Spleen (tissue), 13 donors: ENCODE measurements at regions of chr1 and their contacts with region 1.

Region 1: GRCh38 chr1:156146020-156146768 is 7.2 kb upstream of the SEMA4A start:
- DNase-seq: peak; percentile 87
- H3K4me3 ChIP-seq: peak overlapping the region in 2 of 8 donors; percentile 4 to 41
- H3K27ac ChIP-seq: peak overlapping the region in 6 of 8 donors; percentile 7 to 92 (median 88)
- H3K4me1 ChIP-seq: peaks cover 34 to 57% (median 56%) of the 10 kb centered on the region in 6 donors
- H3K27me3 ChIP-seq: peaks cover 0 to 13% (median 0%) of the 10 kb centered on the region in 7 donors
- CTCF ChIP-seq: peak; percentile 60 to 89 (median 79)
- POLR2A ChIP-seq: no peak

Region 2: DNA sequence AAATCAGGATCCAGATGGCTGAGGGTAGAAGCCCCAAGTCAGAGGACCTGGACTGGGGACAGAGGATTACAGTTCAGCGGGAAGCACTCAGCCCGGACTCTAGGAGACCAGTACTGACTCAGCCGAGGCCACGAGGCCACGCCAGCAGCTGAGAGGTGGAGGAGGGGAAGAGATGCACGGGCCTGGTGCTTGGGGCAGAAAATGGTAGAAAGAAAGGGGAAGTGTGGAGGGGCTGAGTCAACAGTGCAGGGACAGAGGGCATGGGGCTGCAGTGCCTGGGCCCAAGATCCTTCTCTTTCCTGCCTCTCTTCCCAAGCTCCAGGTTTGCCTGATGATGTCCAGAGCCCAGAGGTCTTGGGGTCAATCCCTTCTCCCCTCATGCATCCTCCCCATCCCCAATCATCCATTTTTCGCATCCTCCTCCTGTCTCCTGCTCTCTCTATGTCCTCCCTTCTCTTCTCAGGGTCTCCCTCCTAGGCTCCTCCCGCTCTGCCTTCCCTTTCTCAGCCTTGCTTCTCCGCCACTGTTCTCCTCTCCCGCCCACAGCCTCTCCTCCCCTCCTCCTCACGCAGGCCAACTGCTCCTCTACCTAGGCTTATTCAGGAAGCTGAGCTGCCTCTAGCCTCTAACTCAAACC is 175.5 kb before region 1 on chr1:
- intact Hi-C with region 1: no loop called
- DNase-seq: peak; percentile 94
- H3K4me3 ChIP-seq: peak overlapping the region in 2 of 8 donors; percentile 4 to 46
- H3K27ac ChIP-seq: peak overlapping the region; percentile 60 to 99 (median 92)
- H3K4me1 ChIP-seq: peaks cover 93 to 100% (median 98%) of the 10 kb centered on the region in 6 donors
- H3K27me3 ChIP-seq: no peaks in the 10 kb centered on the region
- CTCF ChIP-seq: peak in 1 of 11 experiments; percentile 18
- POLR2A ChIP-seq: no peak

Region 3: DNA sequence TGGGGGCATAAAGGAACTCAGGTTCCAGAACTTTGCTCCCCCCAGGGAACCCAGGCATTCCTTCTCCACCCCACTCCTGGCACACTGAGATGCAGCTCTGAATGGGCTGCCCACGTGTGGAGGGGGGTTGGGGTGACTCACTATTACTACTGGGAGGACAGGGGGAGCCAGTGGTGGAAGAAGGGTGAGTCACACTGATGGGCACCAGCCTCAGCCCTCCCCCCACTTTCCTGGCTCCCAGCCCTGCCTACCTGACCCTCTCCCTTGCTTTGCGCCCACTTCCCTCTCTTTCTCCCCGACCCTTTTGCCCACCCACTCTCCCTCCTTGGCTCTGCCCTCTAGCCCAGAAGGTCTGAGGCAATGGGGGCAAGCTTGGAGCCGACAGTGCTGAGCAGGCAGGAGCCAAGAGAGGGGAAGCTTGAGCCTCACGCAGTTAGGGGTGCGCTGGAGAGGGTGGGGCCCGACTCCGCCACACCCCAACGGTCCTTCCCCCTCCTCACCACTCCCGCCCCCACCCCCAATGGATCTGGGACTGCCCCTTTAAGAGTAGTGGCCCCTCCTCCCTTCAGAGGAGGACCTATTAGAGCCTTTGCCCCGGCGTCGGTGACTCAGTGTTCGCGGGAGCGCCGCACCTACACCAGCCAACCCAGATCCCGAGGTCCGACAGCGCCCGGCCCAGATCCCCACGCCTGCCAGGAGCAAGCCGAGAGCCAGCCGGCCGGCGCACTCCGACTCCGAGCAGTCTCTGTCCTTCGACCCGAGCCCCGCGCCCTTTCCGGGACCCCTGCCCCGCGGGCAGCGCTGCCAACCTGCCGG is 31.9 kb before region 1 on chr1 and contains the start of gene LMNA:
- intact Hi-C with region 1: no loop called
- DNase-seq: peak; percentile 87
- H3K4me3 ChIP-seq: peak within 1 kb of the TSS; percentile 58 to 97 (median 82)
- H3K27ac ChIP-seq: peak within 1 kb of the TSS; percentile 74 to 92 (median 86)
- H3K4me1 ChIP-seq: peaks cover 13 to 69% (median 46%) of the 10 kb centered on the region in 6 donors
- H3K27me3 ChIP-seq: peaks cover 0 to 62% (median 6%) of the 10 kb centered on the region in 7 donors
- CTCF ChIP-seq: no peak
- POLR2A ChIP-seq: peak in 1 of 3 donors; percentile 86
- total RNA-seq, gene LMNA: 95.1 to 279 (median 124) TPM

Region 4: GRCh38 chr1:156225677-156226014 is 79.5 kb after region 1 on chr1:
- intact Hi-C with region 1: loop called (anchors 2 kb)
- DNase-seq: no peak
- H3K4me3 ChIP-seq: no peak overlapping the region
- H3K27ac ChIP-seq: peak overlapping the region in 4 of 8 donors; percentile 50 to 64 (median 52)
- H3K4me1 ChIP-seq: peaks cover 0 to 31% (median 10%) of the 10 kb centered on the region in 6 donors
- H3K27me3 ChIP-seq: no peaks in the 10 kb centered on the region
- CTCF ChIP-seq: peak in 3 of 11 experiments; percentile 4 to 47 (median 22)
- POLR2A ChIP-seq: no peak